ENCODE measurements at regions of chr10 and their contacts with region 1.

Region 1: DNA sequence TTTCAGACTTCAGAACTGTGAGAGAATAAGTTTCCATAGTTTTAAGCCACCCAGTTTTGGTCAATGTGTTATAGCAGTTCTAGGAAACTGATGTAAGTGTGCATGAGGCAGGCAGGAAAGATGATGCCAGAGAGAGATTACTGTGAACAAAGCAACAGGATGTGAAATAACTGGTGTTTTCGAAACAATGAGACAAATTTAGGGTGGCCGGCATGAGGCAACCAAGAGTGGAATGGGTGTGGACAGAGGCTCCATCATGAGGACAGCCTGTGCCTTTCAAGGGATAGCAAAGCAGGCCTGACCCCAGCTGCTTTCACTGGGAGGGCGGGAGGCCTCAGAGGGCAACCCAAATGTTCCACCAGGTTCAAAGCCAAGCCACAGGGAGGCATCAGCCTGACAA is 67.3 kb upstream of the UCN3 start:
- DNase-seq: no peak
- ATAC-seq: no peak
- H3K4me3 ChIP-seq: no peak overlapping the region
- H3K27ac ChIP-seq: no peak overlapping the region
- H3K4me1 ChIP-seq: no peaks in the 10 kb centered on the region
- H3K27me3 ChIP-seq: no peaks in the 10 kb centered on the region
- CTCF ChIP-seq: no peak

Region 2: GRCh38 chr10:5555021-5555510 is 257.6 kb after region 1 on chr10:
- CTCF ChIA-PET with region 1: no interaction called
- POLR2A ChIA-PET with region 1: interaction called, 11 read pairs
- in situ Hi-C with region 1: no loop called
- intact Hi-C with region 1: no loop called
- DNase-seq: no peak
- ATAC-seq: no peak
- H3K4me3 ChIP-seq: no peak overlapping the region
- H3K27ac ChIP-seq: no peak overlapping the region
- H3K4me1 ChIP-seq: peaks cover 6% of the 10 kb centered on the region; the same call in 1 of the 2 replicates
- H3K27me3 ChIP-seq: no peaks in the 10 kb centered on the region
- CTCF ChIP-seq: no peak

Measured in Panc1 (cell line).